Natural killer cell (primary cell): ENCODE measurements at regions of chr20 and their contacts with region 1.

Region 1: GRCh38 chr20:38645980-38646858 is 44.6 kb downstream of the ARHGAP40 start:
- DNase-seq: peak; percentile 88 to 94
- ATAC-seq: peak; percentile 95 to 100 (median 100)
- H3K4me3 ChIP-seq: no peak overlapping the region
- H3K4me3 Mint-ChIP-seq: peak overlapping the region; percentile 84
- H3K27ac ChIP-seq: no peak overlapping the region
- H3K27ac Mint-ChIP-seq: peak overlapping the region in 1 of 2 donors; percentile 83
- H3K4me1 ChIP-seq: peaks cover 9% of the 10 kb centered on the region
- H3K4me1 Mint-ChIP-seq: peaks cover 9 to 12% of the 10 kb centered on the region in 2 donors
- H3K27me3 ChIP-seq: peaks cover 8% of the 10 kb centered on the region
- H3K27me3 Mint-ChIP-seq: peaks cover 24 to 37% of the 10 kb centered on the region in 2 donors
- CTCF ChIP-seq: peak; percentile 89

Region 2: DNA sequence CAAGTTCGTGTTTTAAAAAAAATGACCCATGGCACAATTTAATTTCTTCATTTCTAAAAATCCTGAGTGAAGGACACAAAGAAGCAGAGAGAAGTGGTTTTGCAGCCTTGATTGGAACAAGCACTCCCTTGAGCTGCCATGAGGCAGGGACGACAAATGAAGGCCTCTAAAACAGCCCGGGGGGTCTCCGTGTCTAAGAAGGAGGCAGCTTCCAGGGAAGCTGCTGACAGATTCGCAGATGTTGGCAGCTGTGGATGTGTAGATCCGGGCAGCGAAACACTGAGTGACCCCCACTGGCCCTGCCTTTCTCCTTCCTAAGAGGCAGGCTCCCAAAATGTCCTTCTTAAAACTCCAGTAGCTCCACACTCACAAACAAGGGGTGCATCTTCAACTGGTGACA is 309.5 kb before region 1 on chr20:
- intact Hi-C with region 1: no loop called
- DNase-seq: no peak
- ATAC-seq: no peak
- H3K4me3 ChIP-seq: no peak overlapping the region
- H3K4me3 Mint-ChIP-seq: no peak overlapping the region
- H3K27ac ChIP-seq: no peak overlapping the region
- H3K27ac Mint-ChIP-seq: no peak overlapping the region
- H3K4me1 ChIP-seq: no peaks in the 10 kb centered on the region
- H3K4me1 Mint-ChIP-seq: peaks cover 5 to 8% of the 10 kb centered on the region in 2 donors
- H3K27me3 ChIP-seq: peaks cover 2% of the 10 kb centered on the region
- H3K27me3 Mint-ChIP-seq: peaks cover 15 to 19% of the 10 kb centered on the region in 2 donors
- CTCF ChIP-seq: no peak

Region 3: GRCh38 chr20:38730989-38731737 is 84.9 kb after region 1 on chr20:
- intact Hi-C with region 1: loop called (anchors 1 kb)
- DNase-seq: peak; percentile 74 to 88
- ATAC-seq: peak; percentile 78 to 83 (median 81)
- H3K4me3 ChIP-seq: peak overlapping the region; percentile 17
- H3K4me3 Mint-ChIP-seq: peak overlapping the region; percentile 67
- H3K27ac ChIP-seq: no peak overlapping the region
- H3K27ac Mint-ChIP-seq: peak overlapping the region in 1 of 2 donors; percentile 36
- H3K4me1 ChIP-seq: peaks cover 55% of the 10 kb centered on the region
- H3K4me1 Mint-ChIP-seq: peaks cover 45 to 47% of the 10 kb centered on the region in 2 donors
- H3K27me3 ChIP-seq: peaks cover 81% of the 10 kb centered on the region
- H3K27me3 Mint-ChIP-seq: peaks cover 85 to 88% of the 10 kb centered on the region in 2 donors
- CTCF ChIP-seq: peak; percentile 99

Region 4: GRCh38 chr20:38748097-38748860 is 102.1 kb after region 1 on chr20 and contains the start of gene ACTR5:
- intact Hi-C with region 1: loop called (anchors 1 kb)
- DNase-seq: peak; percentile 97 to 98
- ATAC-seq: peak; percentile 91 to 98 (median 94)
- H3K4me3 ChIP-seq: peak within 1 kb of the TSS; percentile 74
- H3K4me3 Mint-ChIP-seq: peak within 1 kb of the TSS; percentile 98
- H3K27ac ChIP-seq: peak within 1 kb of the TSS; percentile 96
- H3K27ac Mint-ChIP-seq: peak within 1 kb of the TSS; percentile 97 to 98
- H3K4me1 ChIP-seq: peaks cover 19% of the 10 kb centered on the region
- H3K4me1 Mint-ChIP-seq: peaks cover 23 to 26% of the 10 kb centered on the region in 2 donors
- H3K27me3 ChIP-seq: no peaks in the 10 kb centered on the region
- H3K27me3 Mint-ChIP-seq: peaks cover 0 to 3% of the 10 kb centered on the region in 2 donors
- CTCF ChIP-seq: no peak
- total RNA-seq, gene ACTR5: 14.4 to 17.7 (median 17.6) TPM

Region 5: DNA sequence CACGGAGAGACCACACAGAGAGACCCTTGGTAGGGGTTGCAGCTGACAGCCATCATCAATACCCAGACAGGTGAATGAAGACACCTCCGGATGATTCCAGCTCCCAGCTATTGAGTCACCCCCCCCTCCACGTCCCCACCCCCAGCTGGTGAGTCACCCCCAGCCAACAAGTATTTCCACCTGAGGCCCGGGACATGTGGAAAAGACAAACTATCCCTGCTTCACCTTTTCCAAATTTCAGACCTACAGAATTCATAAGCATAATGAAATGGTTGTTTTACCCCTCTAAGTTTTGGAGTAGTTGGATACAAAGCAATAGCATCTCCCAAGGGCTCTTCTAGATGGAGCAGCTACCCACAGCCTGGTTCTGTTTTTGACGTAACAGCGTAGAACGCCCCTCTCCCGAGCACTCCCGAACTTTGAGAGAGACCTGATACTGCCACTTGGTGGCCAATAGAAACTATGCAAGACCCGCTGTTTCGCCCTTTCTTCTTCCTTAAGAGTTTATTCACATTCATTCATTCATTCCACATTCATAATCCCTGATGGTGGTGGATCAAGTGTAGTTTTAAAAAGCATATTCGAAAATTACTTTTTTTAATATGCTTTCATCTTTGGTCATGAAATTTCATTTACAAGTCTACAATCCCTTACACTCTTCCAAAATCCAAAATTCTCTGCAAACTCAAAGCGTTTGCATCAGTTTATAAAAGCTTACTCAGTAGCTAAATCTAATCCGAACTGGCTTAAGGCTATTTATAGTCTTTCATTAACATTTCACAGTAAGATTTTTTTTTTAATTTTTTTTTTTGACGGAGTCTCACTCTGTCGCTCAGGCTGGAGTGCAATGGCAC is 144.2 kb after region 1 on chr20:
- intact Hi-C with region 1: loop called (anchors 1 kb)
- DNase-seq: peak in 1 of 2 donors; percentile 81
- ATAC-seq: peak; percentile 64 to 83 (median 82)
- H3K4me3 ChIP-seq: no peak overlapping the region
- H3K4me3 Mint-ChIP-seq: no peak overlapping the region
- H3K27ac ChIP-seq: no peak overlapping the region
- H3K27ac Mint-ChIP-seq: peak overlapping the region in 1 of 2 donors; percentile 73
- H3K4me1 ChIP-seq: peaks cover 8% of the 10 kb centered on the region
- H3K4me1 Mint-ChIP-seq: peaks cover 6 to 23% of the 10 kb centered on the region in 2 donors
- H3K27me3 ChIP-seq: no peaks in the 10 kb centered on the region
- H3K27me3 Mint-ChIP-seq: no peaks in the 10 kb centered on the region
- CTCF ChIP-seq: peak; percentile 68

Region 6: GRCh38 chr20:38893565-38894090 is 247.4 kb after region 1 on chr20:
- intact Hi-C with region 1: loop called (anchors 1 kb)
- DNase-seq: peak; percentile 81 to 91
- ATAC-seq: peak; percentile 88 to 92 (median 90)
- H3K4me3 ChIP-seq: no peak overlapping the region
- H3K4me3 Mint-ChIP-seq: peak overlapping the region; percentile 55
- H3K27ac ChIP-seq: peak overlapping the region; percentile 75
- H3K27ac Mint-ChIP-seq: peak overlapping the region; percentile 88 to 94
- H3K4me1 ChIP-seq: peaks cover 32% of the 10 kb centered on the region
- H3K4me1 Mint-ChIP-seq: peaks cover 36 to 44% of the 10 kb centered on the region in 2 donors
- H3K27me3 ChIP-seq: no peaks in the 10 kb centered on the region
- H3K27me3 Mint-ChIP-seq: no peaks in the 10 kb centered on the region
- CTCF ChIP-seq: peak; percentile 87

Region 7: DNA sequence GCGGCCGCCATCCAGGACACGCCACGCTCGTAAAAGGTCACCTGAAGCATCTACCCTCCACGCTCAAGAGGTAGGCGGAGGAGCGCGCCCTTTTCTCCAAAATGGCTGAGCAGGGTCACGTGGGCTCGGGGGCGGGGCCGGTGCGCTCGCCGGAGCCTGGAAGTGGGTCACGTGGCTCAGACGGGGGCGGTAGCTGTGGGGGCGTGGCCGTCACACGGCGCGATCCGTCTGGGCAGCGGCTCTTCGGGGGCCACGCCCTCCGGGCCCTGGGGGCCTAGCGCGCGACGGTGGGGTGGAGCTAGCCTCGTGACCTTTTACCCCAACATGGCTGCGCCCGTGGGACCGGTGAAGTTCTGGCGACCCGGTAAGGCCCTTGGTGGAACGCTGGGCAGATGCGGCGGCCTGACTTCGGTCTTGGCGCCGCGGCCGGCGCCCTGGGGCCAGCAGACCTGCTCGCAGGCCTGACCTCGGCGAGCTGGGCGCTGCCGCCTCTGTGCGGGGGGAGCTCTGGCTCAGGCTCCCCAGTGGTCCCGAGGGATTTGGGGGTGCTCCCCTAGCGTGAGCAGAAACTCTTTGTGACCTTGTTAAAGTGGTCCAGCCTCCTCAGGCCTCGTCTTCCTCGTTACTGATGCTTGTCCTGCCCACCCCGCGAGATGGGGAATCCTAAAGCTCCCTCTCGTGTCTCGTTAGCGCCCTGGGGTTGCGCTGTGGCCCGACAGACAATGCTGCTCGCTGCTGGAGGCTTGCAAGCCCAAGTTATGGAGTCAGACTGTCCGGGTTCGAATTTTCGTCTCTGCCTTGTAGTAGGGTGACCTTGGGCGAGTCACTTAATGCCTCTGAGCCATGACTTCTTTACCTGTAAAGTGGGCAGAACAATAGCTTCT is 316.1 kb after region 1 on chr20 and contains the start of gene DHX35:
- intact Hi-C with region 1: loop called (anchors 1 kb)
- DNase-seq: peak; percentile 99 to 100
- ATAC-seq: peak; percentile 99 to 100 (median 99)
- H3K4me3 ChIP-seq: peak within 1 kb of the TSS; percentile 78
- H3K4me3 Mint-ChIP-seq: peak within 1 kb of the TSS; percentile 96
- H3K27ac ChIP-seq: peak within 1 kb of the TSS; percentile 78
- H3K27ac Mint-ChIP-seq: peak within 1 kb of the TSS; percentile 94 to 97
- H3K4me1 ChIP-seq: peaks cover 10% of the 10 kb centered on the region
- H3K4me1 Mint-ChIP-seq: peaks cover 18 to 19% of the 10 kb centered on the region in 2 donors
- H3K27me3 ChIP-seq: no peaks in the 10 kb centered on the region
- H3K27me3 Mint-ChIP-seq: no peaks in the 10 kb centered on the region
- CTCF ChIP-seq: no peak
- total RNA-seq, gene DHX35: 8.8 to 11.4 (median 10.2) TPM

Region 8: DNA sequence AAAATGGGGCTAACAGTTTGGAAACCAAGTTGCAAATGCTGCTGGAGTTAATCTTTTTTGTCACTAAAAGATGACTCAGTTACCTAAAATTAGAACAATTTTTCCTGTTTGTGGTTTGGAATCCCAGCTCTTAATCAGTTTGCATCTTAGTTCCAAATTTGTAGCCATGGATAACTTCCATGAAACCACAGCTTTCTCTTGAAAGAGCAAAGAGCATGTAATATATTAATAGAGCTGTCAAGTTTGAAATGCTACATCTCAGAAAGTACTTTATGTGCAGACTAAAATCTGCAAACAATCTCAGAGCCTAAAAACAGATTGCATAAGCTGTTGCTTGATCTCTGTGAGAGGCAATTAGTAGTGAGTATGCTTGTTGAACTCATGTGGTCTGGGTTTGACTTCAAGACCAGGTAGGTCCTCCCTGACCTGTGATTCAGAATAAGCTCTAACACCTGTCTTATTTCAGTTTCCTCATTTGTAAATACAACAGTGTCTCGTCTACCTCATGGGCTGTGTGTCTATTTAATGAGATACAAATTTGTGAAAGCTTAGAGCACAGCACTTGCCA is 339.5 kb after region 1 on chr20:
- intact Hi-C with region 1: no loop called
- DNase-seq: no peak
- ATAC-seq: no peak
- H3K4me3 ChIP-seq: no peak overlapping the region
- H3K4me3 Mint-ChIP-seq: no peak overlapping the region
- H3K27ac ChIP-seq: no peak overlapping the region
- H3K27ac Mint-ChIP-seq: peak overlapping the region in 1 of 2 donors; percentile 29
- H3K4me1 ChIP-seq: no peaks in the 10 kb centered on the region
- H3K4me1 Mint-ChIP-seq: peaks cover 8 to 13% of the 10 kb centered on the region in 2 donors
- H3K27me3 ChIP-seq: no peaks in the 10 kb centered on the region
- H3K27me3 Mint-ChIP-seq: no peaks in the 10 kb centered on the region
- CTCF ChIP-seq: no peak

Region 9: GRCh38 chr20:39049684-39050554 is 403.7 kb after region 1 on chr20:
- intact Hi-C with region 1: loop called (anchors 1 kb)
- DNase-seq: peak; percentile 82 to 89
- ATAC-seq: peak; percentile 84 to 94 (median 91)
- H3K4me3 ChIP-seq: peak overlapping the region; percentile 73
- H3K4me3 Mint-ChIP-seq: peak overlapping the region; percentile 75
- H3K27ac ChIP-seq: peak overlapping the region; percentile 15
- H3K27ac Mint-ChIP-seq: peak overlapping the region in 1 of 2 donors; percentile 81
- H3K4me1 ChIP-seq: peaks cover 16% of the 10 kb centered on the region
- H3K4me1 Mint-ChIP-seq: no peaks in the 10 kb centered on the region
- H3K27me3 ChIP-seq: no peaks in the 10 kb centered on the region
- H3K27me3 Mint-ChIP-seq: peaks cover 7 to 13% of the 10 kb centered on the region in 2 donors
- CTCF ChIP-seq: peak; percentile 99